ENCODE measurements at regions of chr15 and their contacts with region 1.

Region 1: GRCh38 chr15:48330855-48331795 is at the start of gene DUT:
- DNase-seq: peak; percentile 81
- ATAC-seq: peak; percentile 80
- H3K4me3 Mint-ChIP-seq: peak within 1 kb of the TSS; percentile 97
- H3K27ac Mint-ChIP-seq: peak within 1 kb of the TSS; percentile 89
- H3K4me1 Mint-ChIP-seq: peaks cover 46% of the 10 kb centered on the region
- H3K27me3 Mint-ChIP-seq: no peaks in the 10 kb centered on the region
- CTCF ChIP-seq: no peak
- total RNA-seq, gene DUT: 195 to 204 TPM (median 195 TPM) in 3 replicates

Region 2: DNA sequence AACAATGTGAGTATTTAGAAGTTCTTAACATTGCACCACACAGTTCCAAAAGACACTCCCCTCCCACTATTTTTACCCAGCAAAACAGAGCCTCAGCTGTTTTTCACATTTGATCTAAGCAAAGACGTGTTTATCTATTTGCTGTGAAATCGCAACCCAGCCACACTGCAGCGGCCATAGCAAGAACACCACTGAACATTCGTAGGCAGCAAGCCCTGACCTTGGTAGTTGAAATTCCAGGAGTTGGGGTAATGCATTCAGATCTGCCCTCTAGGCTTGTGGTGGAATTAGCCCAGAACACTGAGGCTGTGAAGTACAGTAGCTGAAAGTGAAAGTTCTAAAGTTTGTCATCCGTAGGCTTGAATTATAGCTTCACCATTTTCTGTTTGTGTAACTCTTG is 227.5 kb before region 1 on chr15:
- CTCF ChIA-PET with region 1: no interaction called
- POLR2A ChIA-PET with region 1: no interaction called
- DNase-seq: no peak
- ATAC-seq: no peak
- H3K4me3 Mint-ChIP-seq: no peak overlapping the region
- H3K27ac Mint-ChIP-seq: no peak overlapping the region
- H3K4me1 Mint-ChIP-seq: no peaks in the 10 kb centered on the region
- H3K27me3 Mint-ChIP-seq: no peaks in the 10 kb centered on the region
- CTCF ChIP-seq: no peak

Region 3: DNA sequence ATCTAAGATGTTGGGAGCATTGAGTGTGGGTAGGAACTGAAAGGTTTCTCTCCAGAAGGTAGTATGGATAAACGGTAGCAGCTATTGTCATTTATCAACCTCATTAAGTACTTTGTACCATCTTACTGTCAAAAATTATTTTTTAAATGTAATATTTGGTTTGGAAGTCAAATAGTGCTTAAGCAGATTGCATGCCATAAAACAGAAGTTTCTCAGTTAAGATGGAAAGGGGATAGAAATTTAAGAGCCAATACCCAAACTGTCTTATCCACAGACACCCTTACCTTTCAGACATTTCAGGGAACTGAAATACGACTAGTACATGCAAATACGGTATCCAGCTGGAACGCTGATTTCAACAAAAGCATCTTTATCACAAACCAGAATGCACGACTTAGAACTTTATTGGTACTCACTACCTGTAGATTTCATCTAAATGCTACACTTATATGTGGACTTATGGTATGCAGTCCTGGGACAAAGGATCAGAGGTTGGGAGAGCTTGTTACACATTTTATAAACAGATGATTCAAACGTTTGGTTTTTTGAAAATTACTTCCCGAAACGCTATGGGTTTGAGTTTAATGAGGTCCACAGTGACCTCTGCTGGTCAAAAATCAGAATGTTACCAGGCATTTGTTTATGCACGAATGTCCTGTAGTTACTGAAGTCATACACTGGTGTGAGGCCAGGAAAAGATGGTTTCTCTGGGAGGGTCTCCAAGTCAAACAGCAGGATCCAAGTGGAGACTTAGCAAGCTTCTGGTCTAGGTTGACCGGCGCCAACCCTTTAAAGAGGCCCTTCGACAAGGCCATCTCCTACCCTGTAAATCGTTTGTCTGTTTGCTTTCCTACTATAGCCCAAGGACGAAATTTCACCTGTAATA is 45.6 kb before region 1 on chr15:
- CTCF ChIA-PET with region 1: interaction called, 18 read pairs
- POLR2A ChIA-PET with region 1: no interaction called
- DNase-seq: peak; percentile 33
- ATAC-seq: peak; percentile 85
- H3K4me3 Mint-ChIP-seq: no peak overlapping the region
- H3K27ac Mint-ChIP-seq: no peak overlapping the region; the same call in 1 of the 2 replicates
- H3K4me1 Mint-ChIP-seq: peaks cover 56% of the 10 kb centered on the region
- H3K27me3 Mint-ChIP-seq: no peaks in the 10 kb centered on the region
- CTCF ChIP-seq: peak; percentile 56